ENCODE measurements at regions of chr1 and their contacts with region 1.

Region 1: GRCh38 chr1:46166521-46167462 is 8.1 kb upstream of the TSPAN1 start:
- DNase-seq: peak in 8 of 9 experiments; percentile 35 to 78 (median 50)
- ATAC-seq: peak; percentile 79
- H3K4me3 ChIP-seq: peak overlapping the region; percentile 57
- H3K4me3 Mint-ChIP-seq: peak overlapping the region; percentile 89
- H3K27ac ChIP-seq: peak overlapping the region; percentile 57 to 69
- H3K27ac Mint-ChIP-seq: peak overlapping the region; percentile 93
- H3K4me1 ChIP-seq: peaks cover 13% of the 10 kb centered on the region
- H3K4me1 Mint-ChIP-seq: peaks cover 16% of the 10 kb centered on the region
- H3K27me3 ChIP-seq: no peaks in the 10 kb centered on the region
- H3K27me3 Mint-ChIP-seq: peaks cover 2% of the 10 kb centered on the region
- CTCF ChIP-seq: no peak

Region 2: GRCh38 chr1:46036894-46037839 is 129.6 kb before region 1 on chr1:
- CTCF ChIA-PET with region 1: interaction called, 21 read pairs
- POLR2A ChIA-PET with region 1: no interaction called
- intact Hi-C with region 1: no loop called
- DNase-seq: peak; percentile 77 to 94 (median 85)
- ATAC-seq: peak; percentile 71
- H3K4me3 ChIP-seq: no peak overlapping the region
- H3K4me3 Mint-ChIP-seq: no peak overlapping the region
- H3K27ac ChIP-seq: no peak overlapping the region
- H3K27ac Mint-ChIP-seq: no peak overlapping the region
- H3K4me1 ChIP-seq: no peaks in the 10 kb centered on the region
- H3K4me1 Mint-ChIP-seq: no peaks in the 10 kb centered on the region
- H3K27me3 ChIP-seq: no peaks in the 10 kb centered on the region
- H3K27me3 Mint-ChIP-seq: no peaks in the 10 kb centered on the region
- CTCF ChIP-seq: peak; percentile 97

Region 3: GRCh38 chr1:46179138-46180081 is 12.6 kb after region 1 on chr1:
- CTCF ChIA-PET with region 1: interaction called, 14 read pairs
- POLR2A ChIA-PET with region 1: interaction called, 5 read pairs
- intact Hi-C with region 1: no loop called
- DNase-seq: peak; percentile 27 to 82 (median 68)
- ATAC-seq: peak; percentile 84
- H3K4me3 ChIP-seq: no peak overlapping the region
- H3K4me3 Mint-ChIP-seq: no peak overlapping the region
- H3K27ac ChIP-seq: no peak overlapping the region
- H3K27ac Mint-ChIP-seq: no peak overlapping the region
- H3K4me1 ChIP-seq: peaks cover 1% of the 10 kb centered on the region
- H3K4me1 Mint-ChIP-seq: peaks cover 5% of the 10 kb centered on the region
- H3K27me3 ChIP-seq: peaks cover 0 to 2% of the 10 kb centered on the region in 2 experiments
- H3K27me3 Mint-ChIP-seq: no peaks in the 10 kb centered on the region
- CTCF ChIP-seq: peak; percentile 94

Region 4: GRCh38 chr1:46197964-46198811 is 31.4 kb after region 1 on chr1 and contains the start of gene POMGNT1:
- CTCF ChIA-PET with region 1: no interaction called
- POLR2A ChIA-PET with region 1: interaction called, 9 read pairs
- intact Hi-C with region 1: loop called in 1 of 2 experiments (anchors 2 kb)
- DNase-seq: peak; percentile 50 to 86 (median 72)
- ATAC-seq: peak; percentile 93
- H3K4me3 ChIP-seq: peak within 1 kb of the TSS; percentile 75 to 93
- H3K4me3 Mint-ChIP-seq: peak within 1 kb of the TSS; percentile 83
- H3K27ac ChIP-seq: peak within 1 kb of the TSS; percentile 58 to 59
- H3K27ac Mint-ChIP-seq: peak within 1 kb of the TSS; percentile 88
- H3K4me1 ChIP-seq: peaks cover 20% of the 10 kb centered on the region
- H3K4me1 Mint-ChIP-seq: peaks cover 32% of the 10 kb centered on the region
- H3K27me3 ChIP-seq: peaks cover 0 to 3% of the 10 kb centered on the region in 2 experiments
- H3K27me3 Mint-ChIP-seq: no peaks in the 10 kb centered on the region
- CTCF ChIP-seq: no peak
- total RNA-seq, gene POMGNT1: 20.3 to 23.4 TPM